PC-3 (cell line): ENCODE measurements at regions of chr3 and their contacts with region 1.

Region 1: DNA sequence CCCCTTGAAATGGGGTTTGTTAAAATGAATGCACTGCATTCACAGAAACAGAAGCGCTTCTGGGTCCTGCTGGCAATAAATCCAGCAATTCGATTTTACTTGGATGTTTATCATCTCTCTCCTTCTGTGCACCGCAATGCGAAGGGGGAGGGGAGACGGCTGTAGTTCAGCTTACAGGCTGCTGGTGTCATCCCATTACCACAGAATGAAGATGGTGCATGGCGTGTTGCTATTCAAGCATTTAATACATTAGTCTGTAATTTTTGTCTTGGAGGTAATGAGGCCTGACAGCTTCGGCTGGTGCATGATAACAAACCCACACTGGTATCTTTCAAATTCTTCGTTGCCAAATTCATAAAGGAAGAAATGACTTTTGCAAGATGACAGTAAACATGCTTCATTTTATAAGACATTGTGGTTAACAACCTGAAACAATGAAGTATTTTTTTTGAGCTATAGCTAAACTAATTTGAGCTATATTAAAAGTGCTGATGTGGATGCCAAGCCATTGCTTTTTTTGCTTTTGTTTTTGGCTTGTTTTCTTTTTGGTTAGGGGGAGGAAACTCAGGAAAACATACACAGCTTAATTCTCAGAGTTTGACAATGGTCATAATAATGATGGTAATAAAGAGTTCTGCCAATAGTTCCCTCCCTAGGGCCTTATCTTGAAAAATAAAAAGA is 418.3 kb downstream of the OTOL1 start:
- DNase-seq: peak; percentile 77
- ATAC-seq: peak; percentile 82
- H3K4me3 ChIP-seq: peak overlapping the region; percentile 27; the same call in 1 of the 2 replicates
- H3K27ac ChIP-seq: peak overlapping the region; percentile 74
- H3K4me1 ChIP-seq: peaks cover 30% of the 10 kb centered on the region
- H3K27me3 ChIP-seq: no peaks in the 10 kb centered on the region
- CTCF ChIP-seq: peak; percentile 79

Region 2: DNA sequence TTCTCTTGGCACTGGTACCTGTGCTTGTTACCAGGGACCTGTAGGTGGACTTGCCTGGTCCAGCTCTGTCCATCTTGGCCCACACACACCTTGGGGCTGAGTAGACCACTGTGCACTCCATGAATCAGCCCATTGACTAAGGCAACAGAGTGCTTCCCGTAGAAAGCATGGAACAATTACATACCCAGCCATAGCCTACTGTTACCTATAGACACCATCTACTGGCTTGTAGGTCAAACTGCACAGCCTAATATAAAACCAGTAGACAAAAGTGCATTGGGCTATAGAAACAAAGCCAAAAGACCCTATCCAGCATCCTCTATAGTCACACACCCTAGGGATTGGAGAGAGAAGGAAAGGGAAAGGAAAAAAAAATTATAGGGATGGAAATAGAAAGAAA is 39.4 kb before region 1 on chr3:
- CTCF ChIA-PET with region 1: no interaction called
- POLR2A ChIA-PET with region 1: no interaction called
- intact Hi-C with region 1: no loop called
- DNase-seq: no peak
- ATAC-seq: no peak
- H3K4me3 ChIP-seq: no peak overlapping the region
- H3K27ac ChIP-seq: no peak overlapping the region
- H3K4me1 ChIP-seq: no peaks in the 10 kb centered on the region
- H3K27me3 ChIP-seq: no peaks in the 10 kb centered on the region
- CTCF ChIP-seq: no peak; the same call in 1 of the 2 replicates

Region 3: GRCh38 chr3:162052636-162053035 is 137.8 kb after region 1 on chr3:
- CTCF ChIA-PET with region 1: no interaction called
- POLR2A ChIA-PET with region 1: no interaction called
- intact Hi-C with region 1: no loop called
- DNase-seq: no peak
- ATAC-seq: no peak
- H3K4me3 ChIP-seq: no peak overlapping the region
- H3K27ac ChIP-seq: no peak overlapping the region
- H3K4me1 ChIP-seq: no peaks in the 10 kb centered on the region
- H3K27me3 ChIP-seq: no peaks in the 10 kb centered on the region
- CTCF ChIP-seq: no peak

Region 4: GRCh38 chr3:162285259-162285658 is 370.4 kb after region 1 on chr3:
- CTCF ChIA-PET with region 1: no interaction called
- POLR2A ChIA-PET with region 1: interaction called, 3 read pairs
- intact Hi-C with region 1: loop called (anchors 2 kb)
- DNase-seq: no peak
- ATAC-seq: no peak
- H3K4me3 ChIP-seq: no peak overlapping the region
- H3K27ac ChIP-seq: no peak overlapping the region
- H3K4me1 ChIP-seq: peaks cover 16% of the 10 kb centered on the region
- H3K27me3 ChIP-seq: no peaks in the 10 kb centered on the region
- CTCF ChIP-seq: no peak

Region 5: DNA sequence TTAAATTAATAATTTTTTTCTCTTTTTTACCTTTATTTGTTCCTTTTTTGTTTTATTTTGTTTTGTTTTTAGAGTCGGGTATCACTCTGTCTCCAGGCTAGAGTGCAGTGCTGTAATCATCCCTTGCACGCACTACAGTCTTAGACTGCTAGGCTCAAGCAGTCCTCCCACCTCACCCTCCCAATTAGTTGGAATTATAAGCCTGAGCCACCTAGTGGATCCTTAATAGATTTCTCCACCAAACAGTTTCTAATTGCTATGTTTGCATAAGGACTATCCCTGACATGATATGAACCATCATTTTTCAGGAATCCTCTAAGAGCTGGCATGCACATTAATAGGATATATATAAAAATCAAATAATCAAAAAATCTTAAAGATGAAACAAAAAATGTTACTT is 575.0 kb after region 1 on chr3:
- CTCF ChIA-PET with region 1: interaction called, 3 read pairs
- POLR2A ChIA-PET with region 1: no interaction called
- intact Hi-C with region 1: loop called (anchors 5 kb)
- DNase-seq: peak; percentile 53
- ATAC-seq: peak; percentile 60
- H3K4me3 ChIP-seq: no peak overlapping the region
- H3K27ac ChIP-seq: no peak overlapping the region
- H3K4me1 ChIP-seq: peaks cover 21% of the 10 kb centered on the region
- H3K27me3 ChIP-seq: no peaks in the 10 kb centered on the region
- CTCF ChIP-seq: peak; percentile 57

Region 6: GRCh38 chr3:162799910-162800309 is 885.0 kb after region 1 on chr3:
- CTCF ChIA-PET with region 1: interaction called, 3 read pairs
- POLR2A ChIA-PET with region 1: no interaction called
- intact Hi-C with region 1: loop called (anchors 10 kb)
- DNase-seq: peak; percentile 10
- ATAC-seq: no peak
- H3K4me3 ChIP-seq: no peak overlapping the region
- H3K27ac ChIP-seq: no peak overlapping the region
- H3K4me1 ChIP-seq: no peaks in the 10 kb centered on the region
- H3K27me3 ChIP-seq: no peaks in the 10 kb centered on the region
- CTCF ChIP-seq: peak; percentile 56